MCF 10A (cell line): ENCODE measurements at regions of chr13 and their contacts with region 1.

Region 1: GRCh38 chr13:41411522-41411921 is 45.8 kb upstream of the RGCC start:
- DNase-seq: peak; percentile 59
- H3K4me3 Mint-ChIP-seq: no peak overlapping the region
- H3K27ac Mint-ChIP-seq: no peak overlapping the region
- H3K4me1 Mint-ChIP-seq: no peaks in the 10 kb centered on the region
- H3K27me3 Mint-ChIP-seq: no peaks in the 10 kb centered on the region
- CTCF ChIP-seq: peak; percentile 54

Region 2: GRCh38 chr13:41562083-41562482 is 150.6 kb after region 1 on chr13:
- CTCF ChIA-PET with region 1: interaction called, 3 read pairs
- POLR2A ChIA-PET with region 1: no interaction called
- intact Hi-C with region 1: loop called (anchors 10 kb)
- DNase-seq: peak; percentile 23
- H3K4me3 Mint-ChIP-seq: no peak overlapping the region
- H3K27ac Mint-ChIP-seq: no peak overlapping the region
- H3K4me1 Mint-ChIP-seq: peaks cover 10% of the 10 kb centered on the region
- H3K27me3 Mint-ChIP-seq: no peaks in the 10 kb centered on the region
- CTCF ChIP-seq: no peak

Region 3: DNA sequence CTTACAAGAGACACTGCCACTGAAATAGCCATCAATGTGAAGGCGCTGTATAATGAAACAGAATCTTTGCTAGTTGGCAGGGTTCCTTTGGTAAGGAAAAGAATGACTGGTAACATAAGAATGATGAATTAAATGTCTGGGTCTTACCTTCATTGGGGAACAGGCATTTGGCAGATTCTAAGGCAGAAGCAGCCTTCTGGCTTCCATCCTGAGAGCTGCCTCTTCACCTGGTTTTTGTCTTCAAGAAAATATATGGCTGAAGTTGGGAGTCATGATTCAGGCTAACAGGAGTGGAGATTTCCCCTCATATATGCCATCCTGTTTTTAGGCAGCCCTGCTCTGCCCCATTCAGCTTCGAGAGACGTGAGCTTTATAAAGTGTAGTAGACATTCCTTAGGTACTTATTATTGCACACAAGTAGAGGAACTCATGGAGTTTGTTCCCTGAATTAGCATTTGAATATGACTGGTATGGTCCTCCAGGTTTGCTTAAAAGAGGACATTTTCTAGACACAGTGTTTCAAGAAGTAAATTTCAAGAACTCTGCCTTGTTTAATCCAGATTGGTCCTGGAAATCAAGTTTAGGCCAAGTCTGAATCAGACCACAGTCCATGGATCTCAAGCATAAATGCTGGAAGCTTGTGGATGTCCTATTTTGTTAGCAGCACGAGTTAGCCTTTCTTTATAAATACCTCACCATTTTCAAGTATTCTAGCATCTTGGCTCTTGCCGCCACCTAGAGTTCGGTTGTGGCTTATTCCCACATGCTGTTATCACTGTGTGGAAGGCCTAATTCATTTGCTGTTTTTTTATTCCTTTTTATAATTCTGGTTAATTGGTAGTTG is 804.3 kb after region 1 on chr13:
- CTCF ChIA-PET with region 1: interaction called, 3 read pairs
- POLR2A ChIA-PET with region 1: no interaction called
- intact Hi-C with region 1: loop called (anchors 2 kb)
- DNase-seq: peak; percentile 49
- H3K4me3 Mint-ChIP-seq: no peak overlapping the region
- H3K27ac Mint-ChIP-seq: no peak overlapping the region
- H3K4me1 Mint-ChIP-seq: peaks cover 24% of the 10 kb centered on the region
- H3K27me3 Mint-ChIP-seq: no peaks in the 10 kb centered on the region
- CTCF ChIP-seq: peak; percentile 47